ENCODE measurements at regions of chr1 and their contacts with region 1.

Region 1: DNA sequence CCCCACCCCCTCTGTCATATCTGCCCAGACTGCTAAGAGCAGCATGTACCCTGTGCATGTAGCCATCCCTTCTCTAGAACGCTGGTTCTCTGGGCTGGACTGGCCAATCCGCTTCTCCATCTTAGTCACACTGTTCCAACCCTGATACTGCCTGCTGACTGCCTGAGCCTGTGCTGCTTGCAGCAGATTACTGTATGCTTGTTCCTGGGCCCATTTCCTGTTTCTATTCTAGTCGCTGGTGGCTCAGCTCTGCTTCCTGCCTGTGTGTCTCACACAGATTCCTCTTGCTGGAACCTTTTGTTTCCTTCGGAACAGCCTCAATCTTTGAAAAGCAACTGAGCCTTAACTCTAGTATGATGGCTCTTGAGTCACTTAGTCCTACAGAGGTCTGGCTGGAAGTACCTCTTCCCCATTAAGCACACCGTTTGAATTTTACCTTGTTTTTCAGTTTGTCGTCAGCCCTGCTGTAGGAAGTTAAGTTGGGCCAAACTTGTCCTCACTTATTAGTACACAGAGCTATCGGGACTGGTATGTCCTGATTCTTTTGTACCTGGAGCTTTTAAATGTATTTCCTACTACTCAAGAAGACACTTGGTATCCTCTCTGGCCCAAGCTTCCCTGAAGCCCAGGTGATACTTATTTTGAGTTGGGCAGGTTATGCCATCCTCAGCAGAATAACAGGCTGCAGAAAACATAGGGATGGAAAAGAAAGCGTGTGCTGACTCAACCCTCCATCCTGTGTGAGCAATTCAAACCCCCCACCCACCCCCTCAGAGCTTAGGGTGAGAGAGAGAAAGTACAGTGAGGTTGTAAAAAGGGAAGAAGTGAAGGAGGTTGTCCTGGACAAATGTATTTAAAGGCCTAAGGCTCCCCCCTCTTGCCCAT is 43.4 kb upstream of the PIGV start:
- DNase-seq: peak; percentile 81 to 93 (median 88)
- H3K4me3 ChIP-seq: peak overlapping the region in 1 of 2 donors; percentile 41
- H3K4me3 Mint-ChIP-seq: peak overlapping the region; percentile 5 to 90 (median 79)
- H3K27ac ChIP-seq: peak overlapping the region; percentile 70
- H3K27ac Mint-ChIP-seq: peak overlapping the region; percentile 90 to 98 (median 93)
- H3K4me1 ChIP-seq: peaks cover 95% of the 10 kb centered on the region
- H3K4me1 Mint-ChIP-seq: peaks cover 66 to 93% (median 79%) of the 10 kb centered on the region in 4 donors
- H3K27me3 ChIP-seq: no peaks in the 10 kb centered on the region
- H3K27me3 Mint-ChIP-seq: no peaks in the 10 kb centered on the region

Region 2: GRCh38 chr1:26190373-26190987 is 553.8 kb before region 1 on chr1 and contains the start of gene CATSPER4:
- CTCF ChIA-PET with region 1: no interaction called
- POLR2A ChIA-PET with region 1: no interaction called
- intact Hi-C with region 1: no loop called
- DNase-seq: peak in 4 of 5 donors; percentile 13 to 33 (median 18)
- H3K4me3 ChIP-seq: no peak within 1 kb of the TSS
- H3K4me3 Mint-ChIP-seq: no peak within 1 kb of the TSS
- H3K27ac ChIP-seq: no peak within 1 kb of the TSS
- H3K27ac Mint-ChIP-seq: peak within 1 kb of the TSS in 4 of 7 donors; percentile 36 to 88 (median 66)
- H3K4me1 ChIP-seq: peaks cover 7% of the 10 kb centered on the region
- H3K4me1 Mint-ChIP-seq: peaks cover 6 to 30% (median 14%) of the 10 kb centered on the region in 4 donors
- H3K27me3 ChIP-seq: no peaks in the 10 kb centered on the region
- H3K27me3 Mint-ChIP-seq: no peaks in the 10 kb centered on the region
- total RNA-seq, gene CATSPER4: not detected

Region 3: DNA sequence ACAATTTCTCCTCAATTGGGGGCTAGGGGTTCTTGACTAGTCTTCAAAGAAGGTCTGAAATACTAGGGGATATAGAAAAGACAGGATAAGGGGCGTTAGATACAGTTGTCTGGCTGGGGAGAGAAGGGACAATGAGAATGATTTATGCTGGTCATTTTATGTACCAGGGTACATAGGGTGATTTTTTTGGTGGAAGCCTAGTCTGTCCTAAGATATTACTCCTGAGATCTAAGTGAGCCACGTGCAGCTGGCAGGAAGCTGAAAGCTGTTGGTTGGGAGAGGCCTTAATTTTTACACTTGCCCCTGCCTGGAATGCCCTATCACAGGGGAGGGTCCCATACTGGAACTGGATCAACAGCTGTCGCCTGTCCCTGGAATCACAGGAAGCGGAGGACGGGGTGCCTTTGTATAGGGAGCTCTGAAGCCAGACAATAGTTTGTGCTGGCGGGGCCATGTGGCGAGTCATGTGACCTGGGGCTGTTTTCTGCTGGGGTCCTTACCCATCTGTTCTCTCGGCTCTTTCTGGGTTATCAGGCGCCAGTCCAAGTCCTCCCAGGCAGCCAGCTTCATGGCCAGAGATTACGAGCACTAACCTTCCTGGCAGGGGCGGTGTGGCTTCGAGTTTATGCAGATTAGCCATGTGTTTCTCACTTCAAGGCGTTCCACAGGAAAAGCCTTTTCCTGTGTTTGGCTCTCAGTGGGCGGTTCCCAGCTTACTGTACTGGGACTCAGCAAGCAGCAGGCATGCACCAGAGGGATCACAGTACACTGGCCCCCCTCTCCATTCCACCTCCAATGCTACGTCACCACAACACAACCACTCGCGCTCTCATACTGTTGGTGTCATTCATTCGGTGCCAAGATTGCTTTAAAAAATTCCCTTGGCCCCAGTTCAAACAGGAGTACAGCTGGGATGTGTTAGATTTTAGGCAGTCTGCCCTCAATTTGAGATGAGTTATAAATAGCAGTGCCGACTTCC is 21.0 kb before region 1 on chr1:
- CTCF ChIA-PET with region 1: interaction called, 7 read pairs
- POLR2A ChIA-PET with region 1: interaction called, 19 read pairs
- intact Hi-C with region 1: loop called (anchors 2 kb)
- DNase-seq: peak; percentile 25 to 81 (median 31)
- H3K4me3 ChIP-seq: peak overlapping the region in 1 of 2 donors; percentile 44
- H3K4me3 Mint-ChIP-seq: peak overlapping the region; percentile 44 to 87 (median 74)
- H3K27ac ChIP-seq: peak overlapping the region; percentile 23
- H3K27ac Mint-ChIP-seq: peak overlapping the region; percentile 62 to 92 (median 78)
- H3K4me1 ChIP-seq: peaks cover 96% of the 10 kb centered on the region
- H3K4me1 Mint-ChIP-seq: peaks cover 77 to 94% (median 84%) of the 10 kb centered on the region in 4 donors
- H3K27me3 ChIP-seq: no peaks in the 10 kb centered on the region
- H3K27me3 Mint-ChIP-seq: no peaks in the 10 kb centered on the region

Region 4: DNA sequence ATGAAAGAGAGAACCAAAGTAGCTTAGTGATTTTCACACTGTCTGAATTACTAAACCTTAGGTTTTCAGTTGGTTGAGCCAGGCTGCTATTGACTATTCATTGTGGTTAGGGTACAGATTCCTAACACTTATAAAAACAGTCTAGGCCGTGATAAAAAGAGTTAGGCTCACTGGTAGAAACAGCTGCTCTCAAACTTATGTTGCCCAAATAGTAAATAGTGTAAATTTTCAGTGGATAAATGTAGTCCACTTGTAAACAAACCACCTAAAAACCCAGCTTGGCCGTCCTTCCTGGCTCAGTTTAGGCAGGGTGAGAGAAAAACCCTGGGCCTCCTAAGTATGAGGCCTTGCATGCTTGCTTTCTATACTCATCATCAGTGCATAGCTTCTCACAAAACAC is 13.6 kb before region 1 on chr1:
- CTCF ChIA-PET with region 1: interaction called, 4 read pairs
- POLR2A ChIA-PET with region 1: interaction called, 13 read pairs
- intact Hi-C with region 1: no loop called
- DNase-seq: no peak
- H3K4me3 ChIP-seq: no peak overlapping the region
- H3K4me3 Mint-ChIP-seq: no peak overlapping the region
- H3K27ac ChIP-seq: no peak overlapping the region
- H3K27ac Mint-ChIP-seq: peak overlapping the region; percentile 23 to 94 (median 56)
- H3K4me1 ChIP-seq: peaks cover 65% of the 10 kb centered on the region
- H3K4me1 Mint-ChIP-seq: peaks cover 57 to 89% (median 75%) of the 10 kb centered on the region in 4 donors
- H3K27me3 ChIP-seq: no peaks in the 10 kb centered on the region
- H3K27me3 Mint-ChIP-seq: no peaks in the 10 kb centered on the region

Region 5: GRCh38 chr1:27057801-27058625 is 313.7 kb after region 1 on chr1:
- CTCF ChIA-PET with region 1: no interaction called
- POLR2A ChIA-PET with region 1: no interaction called
- intact Hi-C with region 1: no loop called
- DNase-seq: no peak
- H3K4me3 ChIP-seq: no peak overlapping the region
- H3K4me3 Mint-ChIP-seq: no peak overlapping the region
- H3K27ac ChIP-seq: no peak overlapping the region
- H3K27ac Mint-ChIP-seq: no peak overlapping the region
- H3K4me1 ChIP-seq: no peaks in the 10 kb centered on the region
- H3K4me1 Mint-ChIP-seq: no peaks in the 10 kb centered on the region
- H3K27me3 ChIP-seq: no peaks in the 10 kb centered on the region
- H3K27me3 Mint-ChIP-seq: no peaks in the 10 kb centered on the region